ENCODE measurements at regions of chr10 and their contacts with region 1.

Region 1: GRCh38 chr10:31739711-31740110 is 188.9 kb downstream of the ARHGAP12 start:
- DNase-seq: no peak
- H3K4me3 ChIP-seq: no peak overlapping the region
- H3K27ac ChIP-seq: no peak overlapping the region
- H3K4me1 ChIP-seq: no peaks in the 10 kb centered on the region
- H3K27me3 ChIP-seq: no peaks in the 10 kb centered on the region
- CTCF ChIP-seq: no peak
- EP300 ChIP-seq: no peak
- POLR2A ChIP-seq: no peak
- RAD21 ChIP-seq: no peak

Region 2: DNA sequence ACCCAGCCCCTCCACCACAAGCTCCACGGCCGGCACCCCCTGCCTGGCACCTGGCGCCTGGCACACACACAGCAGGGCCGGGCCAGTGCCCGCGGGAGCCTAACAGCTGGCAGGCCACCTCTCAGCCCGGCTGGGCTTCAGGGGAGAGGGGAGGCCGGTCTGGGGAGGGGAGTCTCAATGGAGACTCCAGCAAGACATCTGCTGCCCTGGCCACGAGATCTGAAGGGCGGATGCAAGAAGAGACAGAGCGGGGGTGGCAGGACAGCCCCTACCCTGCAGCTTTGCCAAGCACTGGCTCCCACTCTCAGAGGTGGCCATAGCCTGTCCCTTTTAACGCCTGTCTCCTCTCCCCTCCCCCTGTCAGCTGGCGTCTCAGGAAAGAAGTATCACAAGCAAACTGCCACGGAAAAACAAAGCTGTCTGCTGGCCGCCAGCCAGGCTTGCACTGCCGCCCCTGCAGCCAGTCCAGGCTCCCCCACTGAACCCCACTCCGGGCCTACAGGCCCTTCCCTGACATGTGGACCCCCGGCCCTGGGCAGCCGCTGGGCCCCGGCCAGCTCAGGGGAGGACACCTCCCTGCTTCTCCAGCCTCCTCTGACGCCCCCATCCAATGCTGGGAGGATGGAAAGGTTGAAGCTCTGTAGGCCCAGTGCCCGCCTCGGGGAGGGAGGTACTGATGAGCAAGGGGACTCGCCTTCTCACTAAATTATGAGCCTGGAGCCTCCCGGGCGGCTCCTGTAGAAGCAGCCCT is 10.4 kb after region 1 on chr10:
- CTCF ChIA-PET with region 1: interaction called, 23 read pairs
- POLR2A ChIA-PET with region 1: interaction called, 6 read pairs
- DNase-seq: no peak
- H3K4me3 ChIP-seq: no peak overlapping the region
- H3K27ac ChIP-seq: no peak overlapping the region
- H3K4me1 ChIP-seq: peaks cover 4 to 8% (median 7%) of the 10 kb centered on the region in 4 experiments
- H3K27me3 ChIP-seq: no peaks in the 10 kb centered on the region
- CTCF ChIP-seq: no peak
- EP300 ChIP-seq: no peak
- POLR2A ChIP-seq: no peak
- RAD21 ChIP-seq: no peak

Region 3: GRCh38 chr10:31838065-31838464 is 98.4 kb after region 1 on chr10:
- CTCF ChIA-PET with region 1: no interaction called
- POLR2A ChIA-PET with region 1: no interaction called
- DNase-seq: no peak
- H3K4me3 ChIP-seq: no peak overlapping the region
- H3K27ac ChIP-seq: no peak overlapping the region
- H3K4me1 ChIP-seq: peaks cover 0 to 4% (median 0%) of the 10 kb centered on the region in 4 experiments; a peak in 1 of 7 replicates
- H3K27me3 ChIP-seq: no peaks in the 10 kb centered on the region
- CTCF ChIP-seq: no peak
- EP300 ChIP-seq: no peak
- POLR2A ChIP-seq: no peak
- RAD21 ChIP-seq: no peak

Measured in H1 (cell line).